HAP-1 (cell line): ENCODE measurements at regions of chr20 and their contacts with region 1.

Region 1: DNA sequence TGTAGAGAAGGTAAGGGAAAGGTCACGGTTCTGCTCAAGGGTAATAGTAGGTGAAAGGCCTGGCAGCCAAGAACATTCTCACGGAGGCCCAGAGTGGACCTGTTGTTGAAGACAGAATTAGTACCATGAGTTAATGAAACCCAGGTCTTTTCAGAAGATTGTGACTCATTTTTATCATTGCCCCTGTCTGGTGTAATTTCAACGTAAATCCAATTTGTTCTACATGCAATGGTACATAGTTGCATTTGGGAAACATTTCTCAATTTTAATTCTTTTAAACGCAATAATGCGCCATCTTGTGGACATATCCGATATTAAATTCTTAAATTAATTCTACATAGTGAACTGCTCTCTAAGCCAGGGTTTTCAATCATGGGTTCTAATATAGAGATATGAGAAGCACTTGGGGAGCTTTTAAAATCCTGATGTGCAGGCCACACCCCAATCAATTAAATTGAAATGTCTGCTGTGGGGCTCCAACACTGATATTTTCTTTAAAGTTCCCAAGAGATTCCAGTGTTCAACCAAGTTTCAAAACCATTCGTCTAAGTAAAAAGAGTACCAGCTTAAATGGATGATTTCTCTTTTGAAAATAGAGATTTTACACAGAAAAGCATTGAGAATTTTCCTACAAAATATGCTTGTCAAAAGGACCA is 257.4 kb downstream of the PLCB1 start:
- DNase-seq: peak in 1 of 2 experiments; percentile 56
- H3K4me3 ChIP-seq: no peak overlapping the region
- H3K4me1 ChIP-seq: peaks cover 30% of the 10 kb centered on the region
- H3K27me3 ChIP-seq: no peaks in the 10 kb centered on the region

Region 2: DNA sequence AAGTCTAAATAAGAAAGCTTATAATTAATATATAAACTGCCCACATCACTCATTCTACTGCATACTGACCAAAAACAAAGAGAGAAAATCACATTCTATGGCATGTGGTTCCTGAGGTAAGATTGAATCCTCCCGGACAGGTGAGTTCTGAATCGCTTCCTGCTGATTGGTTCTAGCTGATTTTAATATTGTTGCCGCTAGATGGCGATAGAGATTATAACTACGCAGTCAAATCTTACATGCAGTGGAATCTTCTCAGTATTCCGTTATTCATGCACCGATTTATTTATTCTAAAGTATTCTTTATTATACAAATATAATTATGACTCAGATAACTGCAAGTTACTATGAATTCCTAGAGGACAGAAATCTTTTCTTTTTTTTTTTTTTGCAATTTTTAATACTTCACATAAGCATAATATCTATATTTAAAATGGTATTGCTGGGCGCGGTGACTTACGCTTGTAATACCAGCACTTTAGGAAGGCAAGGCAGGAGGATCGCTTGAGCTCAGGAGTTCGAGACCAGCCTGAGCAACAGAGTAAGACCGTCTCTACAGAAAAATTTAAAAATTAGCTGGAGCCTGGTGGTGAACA is 345.7 kb before region 1 on chr20:
- in situ Hi-C with region 1: loop called (anchors 25 kb)
- DNase-seq: peak; percentile 43 to 69
- H3K4me3 ChIP-seq: no peak overlapping the region
- H3K4me1 ChIP-seq: peaks cover 3% of the 10 kb centered on the region
- H3K27me3 ChIP-seq: peaks cover 2% of the 10 kb centered on the region; the same call in 1 of the 2 replicates

Region 3: GRCh38 chr20:8131598-8132483 is 257.7 kb before region 1 on chr20 and contains the start of gene PLCB1:
- in situ Hi-C with region 1: loop called (anchors 10 kb)
- DNase-seq: peak; percentile 71 to 90
- H3K4me3 ChIP-seq: peak within 1 kb of the TSS; percentile 34
- H3K4me1 ChIP-seq: peaks cover 39% of the 10 kb centered on the region
- H3K27me3 ChIP-seq: no peaks in the 10 kb centered on the region

Region 4: GRCh38 chr20:9301129-9302090 is 911.9 kb after region 1 on chr20:
- in situ Hi-C with region 1: no loop called
- DNase-seq: peak; percentile 46 to 79
- H3K4me3 ChIP-seq: no peak overlapping the region
- H3K4me1 ChIP-seq: peaks cover 10% of the 10 kb centered on the region
- H3K27me3 ChIP-seq: no peaks in the 10 kb centered on the region